Endothelial cell of umbilical vein (primary cell): ENCODE measurements at regions of chr9 and their contacts with region 1.

Region 1: DNA sequence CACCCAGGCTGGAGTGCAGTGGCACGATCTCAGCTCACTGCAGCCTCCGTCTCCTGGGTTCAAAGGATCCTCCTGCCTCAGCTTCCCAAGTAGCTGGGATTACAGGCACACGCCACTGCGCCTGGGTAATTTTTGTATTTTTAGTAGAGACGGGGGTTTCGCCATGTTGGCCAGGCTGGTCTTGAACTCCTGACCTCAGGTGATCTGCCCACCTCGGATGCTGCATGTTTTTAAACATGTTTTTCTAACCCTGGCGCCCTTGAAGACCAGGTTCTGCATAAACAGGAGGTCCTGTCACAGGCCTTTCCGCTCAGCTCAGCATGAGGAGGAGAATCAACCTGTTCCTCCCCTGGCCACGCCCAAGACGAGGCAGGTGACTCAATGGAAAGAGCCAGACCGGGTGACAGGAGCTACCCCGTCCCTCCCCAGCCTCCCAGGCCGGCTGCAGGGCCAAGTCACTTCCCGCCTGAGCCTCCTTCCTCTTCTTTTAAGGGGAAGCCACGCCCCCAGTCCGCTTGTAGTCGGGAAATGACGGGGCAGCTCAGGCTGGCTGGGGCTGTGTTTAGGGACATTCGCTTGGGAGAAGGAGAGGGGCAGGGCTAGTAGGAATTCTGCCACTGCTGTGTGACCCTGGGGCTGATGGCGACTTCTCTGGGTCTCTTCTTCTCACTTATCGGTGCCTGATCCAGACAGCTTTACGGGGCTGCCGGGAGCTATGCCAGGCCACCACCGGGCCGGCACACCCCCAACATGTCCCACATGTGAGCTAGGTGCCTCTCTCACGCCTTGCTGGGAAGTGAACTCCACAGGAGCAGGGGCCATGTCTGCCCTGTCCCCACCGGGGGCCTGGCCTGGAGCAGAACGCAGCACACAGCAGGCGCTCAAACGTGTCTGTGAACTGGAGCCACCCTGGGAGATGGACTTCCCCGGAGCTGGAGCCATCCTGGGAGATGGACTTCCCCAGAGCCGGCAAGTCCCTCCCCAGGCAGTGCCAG is 6.1 kb downstream of the NOTCH1 start:
- DNase-seq: peak; percentile 95
- H3K4me3 ChIP-seq: peak overlapping the region in 1 of 3 experiments; percentile 17
- H3K27ac ChIP-seq: peak overlapping the region; percentile 80
- H3K4me1 ChIP-seq: peaks cover 59% of the 10 kb centered on the region
- H3K27me3 ChIP-seq: no peaks in the 10 kb centered on the region
- CTCF ChIP-seq: no peak
- POLR2A ChIP-seq: no peak

Region 2: GRCh38 chr9:135632823-135633222 is 906.9 kb before region 1 on chr9:
- CTCF ChIA-PET with region 1: no interaction called
- POLR2A ChIA-PET with region 1: no interaction called
- dilution Hi-C with region 1: no loop called
- intact Hi-C with region 1: no loop called
- DNase-seq: no peak
- H3K4me3 ChIP-seq: no peak overlapping the region
- H3K27ac ChIP-seq: no peak overlapping the region
- H3K4me1 ChIP-seq: no peaks in the 10 kb centered on the region
- H3K27me3 ChIP-seq: peaks cover 0 to 1% of the 10 kb centered on the region in 2 experiments
- CTCF ChIP-seq: no peak
- POLR2A ChIP-seq: no peak

Region 3: DNA sequence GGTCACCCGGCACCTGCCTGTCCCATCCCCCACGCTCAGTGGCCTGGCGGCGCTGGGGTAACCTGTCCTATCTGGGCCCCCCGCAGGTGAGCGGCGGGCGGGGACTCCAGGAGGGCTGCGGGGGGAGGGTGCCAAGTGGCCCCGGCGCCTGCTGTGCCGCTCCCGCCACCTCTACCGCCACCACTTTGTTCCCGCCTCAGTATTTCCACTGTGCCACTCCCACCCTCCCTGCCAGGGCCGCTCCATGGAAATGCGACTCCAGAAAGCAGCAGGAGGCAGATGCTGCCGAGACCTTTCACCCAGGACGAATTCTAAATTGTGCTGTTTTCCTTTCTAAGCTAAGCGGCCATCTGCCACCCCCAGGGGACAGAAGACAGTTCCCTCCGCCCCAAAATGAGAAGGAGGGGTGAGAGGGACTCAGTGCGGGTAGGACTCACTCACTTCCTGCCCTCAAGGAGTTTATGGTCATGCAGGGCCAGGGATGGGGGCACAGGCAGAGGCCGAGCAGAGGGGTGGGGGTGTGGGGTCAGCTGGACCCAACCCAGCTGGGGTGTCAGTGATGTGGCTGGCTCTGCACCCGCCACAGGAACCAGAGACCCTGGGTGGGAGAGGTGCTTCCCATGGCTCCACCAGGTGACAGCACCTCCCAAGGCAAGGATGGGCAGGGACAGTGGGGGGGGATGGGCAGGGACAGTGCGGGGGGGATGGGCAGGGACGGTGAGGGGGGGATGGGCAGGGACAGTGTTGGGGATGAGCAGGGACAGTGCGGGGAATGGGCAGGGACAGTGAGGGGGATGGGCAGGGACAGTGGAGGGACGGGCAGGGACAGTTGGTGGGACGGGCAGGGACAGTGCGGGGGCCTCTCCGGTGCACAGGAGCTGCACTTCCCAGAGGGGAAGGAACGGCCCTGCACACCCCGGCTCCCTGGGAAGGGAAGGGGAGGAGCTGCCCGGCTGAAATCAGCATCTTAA is 11.7 kb before region 1 on chr9:
- CTCF ChIA-PET with region 1: interaction called, 21 read pairs
- POLR2A ChIA-PET with region 1: interaction called, 15 read pairs
- dilution Hi-C with region 1: no loop called
- intact Hi-C with region 1: loop called (anchors 1 kb)
- DNase-seq: no peak
- H3K4me3 ChIP-seq: no peak overlapping the region
- H3K27ac ChIP-seq: peak overlapping the region; percentile 89
- H3K4me1 ChIP-seq: peaks cover 45% of the 10 kb centered on the region
- H3K27me3 ChIP-seq: no peaks in the 10 kb centered on the region
- CTCF ChIP-seq: no peak
- POLR2A ChIP-seq: no peak

Region 4: GRCh38 chr9:136614372-136614922 is 74.7 kb after region 1 on chr9:
- CTCF ChIA-PET with region 1: interaction called, 12 read pairs
- POLR2A ChIA-PET with region 1: interaction called, 3 read pairs
- dilution Hi-C with region 1: no loop called
- intact Hi-C with region 1: loop called (anchors 2 kb)
- DNase-seq: peak; percentile 94
- H3K4me3 ChIP-seq: no peak overlapping the region
- H3K27ac ChIP-seq: peak overlapping the region; percentile 97
- H3K4me1 ChIP-seq: peaks cover 22% of the 10 kb centered on the region
- H3K27me3 ChIP-seq: no peaks in the 10 kb centered on the region
- CTCF ChIP-seq: no peak
- POLR2A ChIP-seq: no peak

Region 5: GRCh38 chr9:136631038-136632000 is 91.6 kb after region 1 on chr9:
- CTCF ChIA-PET with region 1: interaction called, 59 read pairs
- POLR2A ChIA-PET with region 1: interaction called, 4 read pairs
- dilution Hi-C with region 1: no loop called
- intact Hi-C with region 1: no loop called
- DNase-seq: peak; percentile 74
- H3K4me3 ChIP-seq: no peak overlapping the region
- H3K27ac ChIP-seq: no peak overlapping the region
- H3K4me1 ChIP-seq: no peaks in the 10 kb centered on the region
- H3K27me3 ChIP-seq: no peaks in the 10 kb centered on the region
- CTCF ChIP-seq: peak; percentile 86 to 88
- POLR2A ChIP-seq: no peak

Region 6: DNA sequence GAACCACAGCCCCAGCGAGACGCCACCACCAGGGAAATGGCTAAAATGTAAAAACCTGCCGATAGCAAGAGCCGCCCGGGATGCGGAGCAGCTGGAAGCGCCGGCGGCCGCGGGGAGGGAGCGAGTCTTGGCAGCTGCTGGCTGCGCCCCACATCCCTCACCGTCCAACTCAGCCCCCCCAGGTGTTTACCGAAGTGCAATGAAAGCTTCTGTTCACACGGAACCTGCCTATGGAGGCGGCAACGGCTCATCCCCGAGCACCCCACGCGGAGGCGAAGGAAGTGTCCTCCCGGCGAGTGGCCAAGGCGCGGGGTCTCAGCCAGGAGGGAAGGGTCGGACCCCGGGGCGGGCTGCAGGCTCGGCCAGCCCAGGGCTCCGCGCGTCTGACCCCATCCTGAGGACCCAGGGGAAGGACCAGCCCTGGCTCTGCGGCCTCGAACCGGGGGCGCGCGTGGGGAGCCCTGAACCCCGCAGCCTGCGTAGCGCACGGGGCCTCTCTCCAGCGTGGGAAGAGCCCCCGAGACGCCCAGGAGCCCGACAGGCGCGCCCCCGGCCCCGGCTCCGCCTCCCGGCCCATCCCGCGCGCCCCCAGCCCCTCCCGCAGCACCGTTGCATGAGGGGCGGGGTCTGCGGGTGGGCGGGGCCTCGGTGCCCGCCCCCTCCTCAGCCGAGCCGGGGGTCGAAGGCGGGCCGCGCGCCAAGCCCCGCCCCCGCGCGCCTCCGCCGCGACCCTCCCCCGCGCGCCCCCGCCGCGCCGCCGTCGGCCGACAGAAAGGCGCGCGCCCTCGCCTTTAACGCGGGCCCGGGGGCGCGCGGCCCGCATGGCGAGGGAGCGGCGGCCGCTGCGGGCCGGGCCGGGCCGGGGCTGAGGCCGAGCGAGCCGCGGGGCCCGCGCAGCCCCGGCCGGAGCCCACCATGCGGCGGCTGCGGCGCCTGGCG is 172.3 kb after region 1 on chr9 and contains the start of gene DIPK1B:
- CTCF ChIA-PET with region 1: no interaction called
- POLR2A ChIA-PET with region 1: no interaction called
- dilution Hi-C with region 1: no loop called
- intact Hi-C with region 1: loop called (anchors 5 kb)
- DNase-seq: peak; percentile 48
- H3K4me3 ChIP-seq: peak within 1 kb of the TSS; percentile 68 to 81 (median 75)
- H3K27ac ChIP-seq: peak within 1 kb of the TSS; percentile 96
- H3K4me1 ChIP-seq: peaks cover 27% of the 10 kb centered on the region
- H3K27me3 ChIP-seq: no peaks in the 10 kb centered on the region
- CTCF ChIP-seq: no peak
- POLR2A ChIP-seq: no peak
- total RNA-seq, gene DIPK1B: 242 and 253 TPM in 2 replicates